ENCODE measurements at regions of chr6 and their contacts with region 1.

Region 1: GRCh38 chr6:150905769-150906506 is 40.4 kb downstream of the MTHFD1L start:
- DNase-seq: no peak
- H3K4me3 ChIP-seq: no peak overlapping the region
- H3K27ac ChIP-seq: no peak overlapping the region
- H3K4me1 ChIP-seq: no peaks in the 10 kb centered on the region
- H3K27me3 ChIP-seq: no peaks in the 10 kb centered on the region
- CTCF ChIP-seq: no peak

Region 2: GRCh38 chr6:151004415-151005024 is 98.6 kb after region 1 on chr6:
- intact Hi-C with region 1: loop called (anchors 10 kb)
- DNase-seq: peak in 2 of 5 donors; percentile 38 to 80
- H3K4me3 ChIP-seq: no peak overlapping the region
- H3K27ac ChIP-seq: peak overlapping the region in 1 of 2 donors; percentile 81
- H3K4me1 ChIP-seq: peaks cover 0 to 3% (median 0%) of the 10 kb centered on the region in 3 donors
- H3K27me3 ChIP-seq: no peaks in the 10 kb centered on the region
- CTCF ChIP-seq: no peak